ENCODE measurements at regions of chr14 and their contacts with region 1.

Region 1: GRCh38 chr14:44912041-44912869 is 49.5 kb downstream of the KLHL28 start:
- DNase-seq: no peak
- H3K4me3 ChIP-seq: no peak overlapping the region
- H3K27ac ChIP-seq: no peak overlapping the region
- H3K4me1 ChIP-seq: no peaks in the 10 kb centered on the region
- CTCF ChIP-seq: no peak

Region 2: DNA sequence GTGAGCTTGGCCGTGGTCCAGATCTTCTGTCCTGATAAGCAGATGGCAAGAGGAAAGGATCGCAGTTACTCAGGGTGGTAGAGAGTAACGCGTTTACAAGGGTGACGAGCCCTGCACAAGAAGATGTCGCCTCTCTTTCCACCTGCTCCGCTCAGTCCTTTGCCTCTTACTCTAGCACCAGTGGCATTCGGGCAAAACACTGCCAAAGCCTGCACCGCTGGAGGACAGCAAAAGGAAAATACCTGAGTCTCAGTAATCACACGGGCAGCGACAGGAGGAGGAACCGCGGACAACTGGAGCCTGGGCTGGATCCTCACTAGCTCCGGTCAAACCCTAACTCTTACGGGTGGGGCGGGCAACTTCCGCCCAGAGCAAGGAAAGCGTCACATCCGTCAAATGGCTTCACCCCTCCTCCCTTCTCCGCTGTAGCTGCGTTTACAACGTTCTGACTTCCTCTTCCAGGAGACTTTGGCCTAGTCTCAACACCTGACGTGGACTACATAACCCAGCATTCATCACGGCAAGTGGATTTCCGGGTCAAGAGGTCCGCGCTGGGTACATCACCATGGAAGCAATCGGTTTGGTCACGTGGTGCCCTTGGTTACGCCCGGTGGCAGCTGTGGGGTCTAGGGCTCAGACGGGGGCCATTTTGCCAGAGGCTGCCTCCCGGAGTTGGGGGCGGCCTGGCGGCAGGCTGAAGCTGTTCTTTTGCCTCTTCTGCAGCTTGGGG is 49.5 kb after region 1 on chr14 and contains the starts of genes KLHL28 and TOGARAM1:
- CTCF ChIA-PET with region 1: no interaction called
- POLR2A ChIA-PET with region 1: no interaction called
- intact Hi-C with region 1: no loop called
- DNase-seq: peak; percentile 99
- H3K4me3 ChIP-seq: peak within 1 kb of the TSS; percentile 86
- H3K27ac ChIP-seq: peak within 1 kb of the TSS; percentile 75
- H3K4me1 ChIP-seq: peaks cover 22% of the 10 kb centered on the region
- CTCF ChIP-seq: no peak
- total RNA-seq, gene KLHL28: 3.7 and 10.6 TPM in 2 replicates
- total RNA-seq, gene TOGARAM1: 11.4 and 12.4 TPM in 2 replicates

Region 3: DNA sequence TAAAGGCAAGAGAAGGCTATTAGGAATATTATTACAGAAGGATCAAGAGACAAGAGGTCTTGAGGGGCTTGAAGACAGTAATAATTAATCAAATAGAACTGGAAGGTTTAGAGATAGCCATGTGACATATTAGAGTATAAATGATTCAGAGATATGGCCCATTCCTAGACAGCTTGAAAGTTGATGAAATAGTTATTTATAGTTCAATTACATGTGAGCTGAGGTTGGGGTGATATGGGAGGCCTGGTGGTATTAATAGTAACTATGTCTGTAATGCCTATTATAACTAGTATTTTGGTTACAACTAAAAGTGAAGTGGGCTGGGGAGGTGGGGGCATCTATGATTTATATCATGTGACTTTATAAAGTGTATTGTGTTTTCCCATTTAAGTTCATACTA is 354.8 kb after region 1 on chr14:
- CTCF ChIA-PET with region 1: no interaction called
- POLR2A ChIA-PET with region 1: no interaction called
- intact Hi-C with region 1: loop called (anchors 1 kb)
- DNase-seq: no peak
- H3K4me3 ChIP-seq: no peak overlapping the region
- H3K27ac ChIP-seq: no peak overlapping the region
- H3K4me1 ChIP-seq: no peaks in the 10 kb centered on the region
- CTCF ChIP-seq: no peak

Measured in OCI-LY7 (cell line).